Activated CD4-positive, alpha-beta memory T cell treated with anti-CD3 and anti-CD28 coated beads for 36 hours (primary cell): ENCODE measurements at regions of chr2 and their contacts with region 1.

Region 1: GRCh38 chr2:111091811-111092211 is 28.9 kb upstream of the BCL2L11 start:
- DNase-seq: peak; percentile 34
- H3K4me3 Mint-ChIP-seq: no peak overlapping the region
- H3K27ac Mint-ChIP-seq: no peak overlapping the region
- H3K4me1 Mint-ChIP-seq: peaks cover 18% of the 10 kb centered on the region
- H3K27me3 Mint-ChIP-seq: peaks cover 49% of the 10 kb centered on the region

Region 2: GRCh38 chr2:110748489-110748867 is 343.3 kb before region 1 on chr2:
- CTCF ChIA-PET with region 1: no interaction called
- POLR2A ChIA-PET with region 1: no interaction called
- intact Hi-C with region 1: loop called (anchors 5 kb)
- DNase-seq: peak; percentile 89
- H3K4me3 Mint-ChIP-seq: peak overlapping the region; percentile 23
- H3K27ac Mint-ChIP-seq: peak overlapping the region; percentile 47
- H3K4me1 Mint-ChIP-seq: peaks cover 19% of the 10 kb centered on the region
- H3K27me3 Mint-ChIP-seq: peaks cover 62% of the 10 kb centered on the region

Region 3: GRCh38 chr2:110881908-110882307 is 209.9 kb before region 1 on chr2:
- CTCF ChIA-PET with region 1: interaction called, 3 read pairs
- POLR2A ChIA-PET with region 1: no interaction called
- intact Hi-C with region 1: loop called (anchors 5 kb)
- DNase-seq: peak; percentile 43
- H3K4me3 Mint-ChIP-seq: no peak overlapping the region
- H3K27ac Mint-ChIP-seq: no peak overlapping the region
- H3K4me1 Mint-ChIP-seq: peaks cover 9% of the 10 kb centered on the region
- H3K27me3 Mint-ChIP-seq: peaks cover 42% of the 10 kb centered on the region

Region 4: GRCh38 chr2:111037128-111037527 is 54.7 kb before region 1 on chr2:
- CTCF ChIA-PET with region 1: no interaction called
- POLR2A ChIA-PET with region 1: no interaction called
- intact Hi-C with region 1: no loop called
- DNase-seq: no peak
- H3K4me3 Mint-ChIP-seq: no peak overlapping the region
- H3K27ac Mint-ChIP-seq: no peak overlapping the region
- H3K4me1 Mint-ChIP-seq: peaks cover 6% of the 10 kb centered on the region
- H3K27me3 Mint-ChIP-seq: peaks cover 76% of the 10 kb centered on the region

Region 5: DNA sequence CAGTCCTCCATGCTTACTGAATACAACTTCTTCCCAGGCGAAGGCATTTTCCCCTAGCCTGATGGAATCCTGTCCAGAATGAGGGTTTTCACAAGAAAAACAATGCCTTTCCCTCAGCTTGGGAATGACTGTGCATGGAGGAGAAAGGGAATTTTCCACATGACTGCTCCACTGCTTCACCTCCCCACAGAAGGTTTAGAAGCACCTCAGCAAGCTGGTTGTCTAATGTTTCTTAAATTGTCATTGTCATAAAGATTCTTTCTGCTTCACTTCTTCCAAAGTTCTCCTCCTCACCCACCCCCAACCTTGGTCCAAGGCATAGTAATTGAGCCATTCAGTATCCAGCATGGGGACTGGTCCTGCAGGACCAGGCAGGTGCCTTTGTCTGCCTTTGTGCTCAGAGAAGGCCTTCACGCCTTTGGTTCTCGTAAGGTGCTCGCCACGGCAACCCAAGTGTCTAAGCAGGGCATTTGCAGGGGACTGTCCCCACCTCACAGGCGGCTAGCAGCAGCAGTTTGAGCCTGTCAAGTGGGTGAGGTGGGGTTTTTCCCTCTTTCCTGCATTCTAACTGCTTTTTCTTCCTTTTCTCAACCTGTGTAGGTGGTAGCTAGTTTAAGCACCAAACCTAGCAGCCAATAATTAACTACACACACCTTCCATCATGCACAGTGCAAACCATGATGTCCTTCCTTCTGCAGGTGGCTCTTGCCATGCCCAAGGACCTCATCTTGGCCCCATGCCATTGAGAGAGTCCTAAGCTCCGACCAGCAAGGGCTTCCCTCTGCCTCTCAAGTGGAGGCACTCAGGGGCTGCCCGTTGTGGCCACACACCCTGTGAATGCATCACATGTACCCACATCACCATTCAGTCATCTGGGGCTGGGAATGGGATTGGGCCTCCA is 36.8 kb before region 1 on chr2:
- CTCF ChIA-PET with region 1: no interaction called
- POLR2A ChIA-PET with region 1: interaction called, 3 read pairs
- intact Hi-C with region 1: loop called (anchors 2 kb)
- DNase-seq: peak; percentile 74
- H3K4me3 Mint-ChIP-seq: no peak overlapping the region
- H3K27ac Mint-ChIP-seq: no peak overlapping the region
- H3K4me1 Mint-ChIP-seq: peaks cover 32% of the 10 kb centered on the region
- H3K27me3 Mint-ChIP-seq: peaks cover 61% of the 10 kb centered on the region

Region 6: GRCh38 chr2:111123751-111124150 is 31.9 kb after region 1 on chr2:
- CTCF ChIA-PET with region 1: no interaction called
- POLR2A ChIA-PET with region 1: no interaction called
- intact Hi-C with region 1: no loop called
- DNase-seq: no peak
- H3K4me3 Mint-ChIP-seq: peak overlapping the region; percentile 64
- H3K27ac Mint-ChIP-seq: no peak overlapping the region
- H3K4me1 Mint-ChIP-seq: peaks cover 51% of the 10 kb centered on the region
- H3K27me3 Mint-ChIP-seq: peaks cover 9% of the 10 kb centered on the region

Region 7: GRCh38 chr2:111659416-111660281 is 567.8 kb after region 1 on chr2:
- CTCF ChIA-PET with region 1: no interaction called
- POLR2A ChIA-PET with region 1: no interaction called
- intact Hi-C with region 1: loop called (anchors 2 kb)
- DNase-seq: no peak
- H3K4me3 Mint-ChIP-seq: no peak overlapping the region
- H3K27ac Mint-ChIP-seq: no peak overlapping the region
- H3K4me1 Mint-ChIP-seq: peaks cover 22% of the 10 kb centered on the region
- H3K27me3 Mint-ChIP-seq: peaks cover 23% of the 10 kb centered on the region